ENCODE measurements at regions of chr3 and their contacts with region 1.

Region 1: DNA sequence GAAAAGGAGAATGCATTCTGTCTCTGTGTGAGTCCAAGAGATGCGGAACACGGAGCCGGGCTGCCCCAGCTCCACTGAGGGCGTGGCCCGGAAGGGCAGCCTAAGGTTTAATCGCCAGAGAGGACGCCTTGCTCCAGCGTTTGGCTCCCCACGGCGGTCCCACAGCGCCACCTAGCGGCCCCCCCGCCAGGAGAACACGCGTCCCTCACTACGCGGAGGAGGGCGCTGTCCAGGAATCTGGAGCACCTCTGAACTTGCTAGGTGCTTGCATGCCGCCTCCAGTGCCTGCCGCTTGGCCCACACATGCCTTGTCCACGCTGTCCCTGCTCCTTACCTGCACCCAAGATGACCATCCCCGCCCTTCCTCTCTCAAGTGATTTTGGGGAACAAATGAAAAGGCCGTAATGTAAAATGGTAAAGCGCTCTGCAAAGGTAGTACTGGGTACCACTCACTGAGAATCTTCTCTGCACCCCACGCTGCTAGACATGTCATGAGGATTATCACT is 14.4 kb upstream of the MRPS22 start:
- DNase-seq: peak; percentile 83
- H3K4me3 Mint-ChIP-seq: no peak overlapping the region
- H3K27ac Mint-ChIP-seq: no peak overlapping the region
- H3K4me1 Mint-ChIP-seq: peaks cover 26% of the 10 kb centered on the region
- H3K27me3 Mint-ChIP-seq: peaks cover 28% of the 10 kb centered on the region

Region 2: GRCh38 chr3:138935848-138936740 is 393.3 kb before region 1 on chr3:
- intact Hi-C with region 1: loop called (anchors 1 kb)
- DNase-seq: peak; percentile 60
- H3K4me3 Mint-ChIP-seq: peak overlapping the region; percentile 47
- H3K27ac Mint-ChIP-seq: no peak overlapping the region
- H3K4me1 Mint-ChIP-seq: peaks cover 12% of the 10 kb centered on the region
- H3K27me3 Mint-ChIP-seq: peaks cover 75% of the 10 kb centered on the region

Region 3: GRCh38 chr3:139111392-139112229 is 217.8 kb before region 1 on chr3:
- intact Hi-C with region 1: loop called (anchors 2 kb)
- DNase-seq: peak; percentile 36
- H3K4me3 Mint-ChIP-seq: no peak overlapping the region
- H3K27ac Mint-ChIP-seq: no peak overlapping the region
- H3K4me1 Mint-ChIP-seq: peaks cover 7% of the 10 kb centered on the region
- H3K27me3 Mint-ChIP-seq: peaks cover 15% of the 10 kb centered on the region

Region 4: GRCh38 chr3:139241783-139242182 is 87.6 kb before region 1 on chr3:
- intact Hi-C with region 1: loop called (anchors 10 kb)
- DNase-seq: no peak
- H3K4me3 Mint-ChIP-seq: no peak overlapping the region
- H3K27ac Mint-ChIP-seq: no peak overlapping the region
- H3K4me1 Mint-ChIP-seq: no peaks in the 10 kb centered on the region
- H3K27me3 Mint-ChIP-seq: peaks cover 52% of the 10 kb centered on the region

Region 5: DNA sequence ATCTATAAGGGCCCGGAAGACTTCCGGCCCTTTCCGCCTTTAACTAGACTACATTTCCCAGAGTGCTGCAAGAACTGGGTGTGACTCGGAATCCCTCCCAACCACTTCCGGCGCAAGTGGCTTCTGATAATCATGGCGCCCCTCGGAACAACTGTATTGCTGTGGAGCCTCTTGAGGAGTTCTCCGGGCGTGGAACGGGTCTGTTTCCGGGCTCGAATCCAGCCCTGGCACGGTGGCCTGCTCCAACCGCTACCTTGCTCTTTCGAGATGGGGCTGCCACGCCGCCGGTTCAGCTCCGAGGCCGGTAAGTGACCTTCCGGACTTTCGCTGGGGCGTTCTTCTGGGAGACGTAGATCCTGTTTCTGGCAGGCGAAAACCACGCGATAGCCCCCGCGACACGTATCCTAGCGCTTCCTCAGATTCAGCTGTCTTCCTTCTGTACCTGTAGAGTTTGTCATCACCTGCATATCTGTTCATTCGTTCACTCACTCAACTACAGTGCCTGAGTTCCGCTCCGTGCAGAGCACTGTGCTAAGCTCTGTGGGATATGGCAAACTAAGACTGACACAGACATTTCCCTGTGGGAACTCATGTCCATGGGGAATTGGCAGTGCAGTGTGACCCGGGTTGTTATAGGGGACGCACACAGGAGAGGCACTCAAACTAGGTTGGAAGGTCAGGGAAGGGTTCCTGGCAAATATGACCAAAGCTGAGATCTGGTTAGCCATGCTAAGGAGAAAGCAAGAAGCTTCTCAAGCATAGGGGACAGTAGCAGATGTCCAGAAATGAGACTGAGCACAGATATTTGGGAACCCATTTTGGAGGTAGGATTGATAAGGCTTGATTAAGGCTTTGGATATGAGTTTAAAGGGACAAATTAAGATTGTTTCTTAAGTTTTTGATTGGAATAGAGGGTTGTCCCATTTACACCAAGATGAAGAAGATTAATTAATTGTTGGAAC is 14.8 kb after region 1 on chr3 and contains the start of gene MRPS22:
- intact Hi-C with region 1: no loop called
- DNase-seq: peak; percentile 78
- H3K4me3 Mint-ChIP-seq: no peak within 1 kb of the TSS
- H3K27ac Mint-ChIP-seq: peak within 1 kb of the TSS; percentile 6
- H3K4me1 Mint-ChIP-seq: peaks cover 15% of the 10 kb centered on the region
- H3K27me3 Mint-ChIP-seq: no peaks in the 10 kb centered on the region
- total RNA-seq, gene MRPS22: 51.2 and 51.9 TPM in 2 replicates

Region 6: GRCh38 chr3:139830817-139831216 is 501.4 kb after region 1 on chr3:
- intact Hi-C with region 1: no loop called
- DNase-seq: no peak
- H3K4me3 Mint-ChIP-seq: no peak overlapping the region
- H3K27ac Mint-ChIP-seq: no peak overlapping the region
- H3K4me1 Mint-ChIP-seq: no peaks in the 10 kb centered on the region
- H3K27me3 Mint-ChIP-seq: no peaks in the 10 kb centered on the region